ENCODE measurements at regions of chr3 and their contacts with region 1.

Region 1: DNA sequence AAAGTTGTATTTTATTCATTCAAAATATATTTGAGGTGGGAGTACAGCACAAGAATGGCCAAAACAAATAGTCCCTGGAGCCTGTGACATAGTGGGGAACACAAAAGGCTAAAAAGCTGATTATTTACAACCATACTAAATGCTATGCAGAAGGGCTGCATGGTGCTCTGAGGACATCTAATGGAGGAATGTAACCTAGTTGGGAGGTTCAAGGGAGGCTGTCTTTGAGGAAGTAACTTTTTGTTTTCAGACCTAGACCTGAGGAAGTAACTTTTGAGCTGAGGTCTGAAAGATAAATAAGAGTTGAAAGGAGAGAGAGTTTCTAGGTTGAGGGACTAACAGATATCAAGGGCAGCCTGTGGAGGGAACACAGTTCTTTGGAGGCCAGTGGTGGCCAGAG is 34.8 kb upstream of the RASA2 start:
- DNase-seq: peak; percentile 26 to 83 (median 48)
- ATAC-seq: peak; percentile 89
- H3K4me3 ChIP-seq: no peak overlapping the region
- H3K27ac ChIP-seq: peak overlapping the region; percentile 66
- H3K4me1 ChIP-seq: peaks cover 22 to 47% of the 10 kb centered on the region in 2 experiments
- H3K27me3 ChIP-seq: no peaks in the 10 kb centered on the region
- CTCF ChIP-seq: peak; percentile 76 to 97 (median 87)
- EP300 ChIP-seq: no peak
- POLR2A ChIP-seq: no peak
- RAD21 ChIP-seq: peak; percentile 99

Region 2: DNA sequence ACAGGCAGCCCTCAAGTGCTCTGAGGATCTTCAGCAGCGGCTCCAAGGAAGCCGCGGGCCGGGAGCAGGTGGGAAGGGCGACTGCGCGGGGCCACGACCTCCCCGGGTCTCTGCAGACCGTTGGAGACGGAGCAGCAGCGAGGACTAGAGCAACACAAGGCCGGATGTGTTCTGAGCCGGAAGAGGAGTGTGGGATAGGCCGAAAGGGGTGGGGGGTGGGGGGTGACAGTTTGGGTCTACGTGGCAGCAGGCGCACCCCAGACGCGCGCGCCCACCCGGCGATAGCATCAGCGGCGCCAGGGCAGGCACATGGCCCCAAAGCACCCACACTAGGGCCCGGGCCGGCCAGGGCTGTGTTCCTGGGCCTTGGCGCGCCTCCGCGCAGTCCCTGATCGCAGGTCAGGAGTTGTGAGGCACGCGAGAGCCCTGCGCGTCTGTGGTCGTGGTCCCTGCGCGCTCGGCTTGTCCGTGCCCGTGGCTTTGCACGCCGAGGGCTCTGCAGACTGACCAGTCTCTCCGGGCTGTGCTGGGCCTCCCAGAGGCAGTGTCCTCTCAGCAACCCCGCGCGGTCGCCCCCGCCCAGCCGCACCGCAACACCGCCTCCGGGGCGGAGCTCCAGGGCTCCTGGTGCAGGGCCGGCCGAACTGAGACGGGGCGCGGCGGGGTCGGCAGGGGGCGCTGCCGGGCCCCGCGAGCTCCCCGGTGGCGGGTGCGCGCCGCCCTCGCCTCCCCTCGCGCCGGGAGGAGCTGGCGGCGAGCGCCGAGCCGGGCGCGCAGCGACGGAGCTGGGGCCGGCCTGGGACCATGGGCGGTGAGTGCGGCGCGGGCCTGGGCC is 220.7 kb before region 1 on chr3 and contains the start of gene PXYLP1:
- CTCF ChIA-PET with region 1: no interaction called
- POLR2A ChIA-PET with region 1: no interaction called
- in situ Hi-C with region 1: loop called (anchors 5 kb)
- intact Hi-C with region 1: loop called (anchors 1 kb)
- DNase-seq: peak; percentile 93 to 95 (median 94)
- ATAC-seq: peak; percentile 99
- H3K4me3 ChIP-seq: peak within 1 kb of the TSS; percentile 49
- H3K27ac ChIP-seq: peak within 1 kb of the TSS; percentile 55
- H3K4me1 ChIP-seq: peaks cover 7 to 21% of the 10 kb centered on the region in 2 experiments
- H3K27me3 ChIP-seq: peaks cover 13 to 42% of the 10 kb centered on the region in 2 experiments; a peak in 4 of 5 replicates
- CTCF ChIP-seq: peak; percentile 58 to 89 (median 80)
- EP300 ChIP-seq: no peak
- POLR2A ChIP-seq: peak; percentile 80
- RAD21 ChIP-seq: peak; percentile 63 to 71
- polyA plus RNA-seq, gene PXYLP1: 0.80 to 1.1 TPM

Region 3: GRCh38 chr3:141237701-141238521 is 214.1 kb before region 1 on chr3:
- CTCF ChIA-PET with region 1: no interaction called
- POLR2A ChIA-PET with region 1: interaction called, 3 read pairs
- in situ Hi-C with region 1: loop called (anchors 5 kb)
- intact Hi-C with region 1: no loop called
- DNase-seq: no peak
- ATAC-seq: no peak
- H3K4me3 ChIP-seq: no peak overlapping the region
- H3K27ac ChIP-seq: no peak overlapping the region
- H3K4me1 ChIP-seq: peaks cover 1 to 23% of the 10 kb centered on the region in 2 experiments; a peak in 3 of 5 replicates
- H3K27me3 ChIP-seq: peaks cover 8 to 49% of the 10 kb centered on the region in 2 experiments; a peak in 3 of 5 replicates
- CTCF ChIP-seq: no peak
- EP300 ChIP-seq: no peak
- POLR2A ChIP-seq: no peak
- RAD21 ChIP-seq: no peak

Region 4: GRCh38 chr3:141303481-141304223 is 148.4 kb before region 1 on chr3:
- CTCF ChIA-PET with region 1: interaction called, 10 read pairs
- POLR2A ChIA-PET with region 1: interaction called, 4 read pairs
- in situ Hi-C with region 1: no loop called
- intact Hi-C with region 1: loop called (anchors 1 kb)
- DNase-seq: peak; percentile 68 to 85 (median 70)
- ATAC-seq: peak; percentile 92
- H3K4me3 ChIP-seq: no peak overlapping the region
- H3K27ac ChIP-seq: no peak overlapping the region
- H3K4me1 ChIP-seq: peaks cover 0 to 6% of the 10 kb centered on the region in 2 experiments; a peak in 3 of 5 replicates
- H3K27me3 ChIP-seq: peaks cover 0 to 18% of the 10 kb centered on the region in 2 experiments; a peak in 3 of 5 replicates
- CTCF ChIP-seq: peak; percentile 67 to 90 (median 69)
- EP300 ChIP-seq: no peak
- POLR2A ChIP-seq: no peak
- RAD21 ChIP-seq: peak; percentile 70 to 87

Region 5: DNA sequence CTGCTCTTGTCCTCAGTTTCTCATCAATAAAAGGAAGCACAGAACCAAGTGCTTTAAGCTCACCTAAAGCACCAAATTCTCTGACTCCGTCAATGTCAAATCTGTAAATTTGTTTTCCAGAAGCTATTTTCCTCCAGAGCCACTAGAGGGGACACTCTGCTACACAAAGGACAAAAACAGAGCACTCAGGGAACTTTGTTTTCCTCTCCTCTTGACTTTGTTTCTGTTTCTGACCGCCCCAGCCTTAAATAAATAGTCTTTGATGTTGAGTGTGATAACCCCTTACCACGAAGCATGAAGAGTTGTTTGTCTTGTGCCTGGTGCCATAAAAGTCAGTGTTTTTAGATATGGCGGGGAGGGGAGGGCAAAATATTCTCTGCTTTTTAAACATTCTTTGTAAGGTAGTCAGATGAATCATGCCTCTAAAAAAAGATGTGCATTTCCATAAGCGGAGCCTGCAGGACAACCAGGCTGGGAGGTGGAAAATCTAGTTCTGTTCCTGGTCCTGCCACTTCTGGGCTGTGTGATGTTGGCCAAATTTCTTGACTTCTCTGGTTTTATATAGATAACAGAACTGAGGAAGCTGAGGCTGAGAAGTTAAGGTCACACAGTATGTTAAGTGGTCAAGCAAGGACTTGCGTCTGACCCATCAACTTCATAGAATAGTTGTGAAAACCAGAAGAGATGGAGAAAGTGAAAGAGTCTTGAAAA is 91.0 kb before region 1 on chr3:
- CTCF ChIA-PET with region 1: interaction called, 10 read pairs
- POLR2A ChIA-PET with region 1: interaction called, 3 read pairs
- in situ Hi-C with region 1: no loop called
- intact Hi-C with region 1: loop called (anchors 1 kb)
- DNase-seq: peak; percentile 45 to 78 (median 60)
- ATAC-seq: peak; percentile 86
- H3K4me3 ChIP-seq: no peak overlapping the region
- H3K27ac ChIP-seq: peak overlapping the region; percentile 37; the same call in 1 of the 3 replicates
- H3K4me1 ChIP-seq: peaks cover 0 to 30% of the 10 kb centered on the region in 2 experiments; a peak in 3 of 5 replicates
- H3K27me3 ChIP-seq: no peaks in the 10 kb centered on the region
- CTCF ChIP-seq: peak; percentile 77 to 90 (median 81)
- EP300 ChIP-seq: no peak
- POLR2A ChIP-seq: no peak
- RAD21 ChIP-seq: peak; percentile 90 to 93

Region 6: GRCh38 chr3:141370065-141370533 is 81.9 kb before region 1 on chr3:
- CTCF ChIA-PET with region 1: no interaction called
- POLR2A ChIA-PET with region 1: interaction called, 3 read pairs
- in situ Hi-C with region 1: no loop called
- intact Hi-C with region 1: loop called (anchors 2 kb)
- DNase-seq: peak; percentile 82 to 94 (median 87)
- ATAC-seq: peak; percentile 89
- H3K4me3 ChIP-seq: no peak overlapping the region; the same call in 1 of the 2 replicates
- H3K27ac ChIP-seq: peak overlapping the region; percentile 95
- H3K4me1 ChIP-seq: peaks cover 25 to 42% of the 10 kb centered on the region in 2 experiments
- H3K27me3 ChIP-seq: no peaks in the 10 kb centered on the region
- CTCF ChIP-seq: peak; percentile 61 to 73 (median 65)
- EP300 ChIP-seq: peak; percentile 34; the same call in 1 of the 2 replicates
- POLR2A ChIP-seq: peak; percentile 65
- RAD21 ChIP-seq: peak; percentile 49 to 58